ENCODE measurements at regions of chr16 and their contacts with region 1.

Region 1: GRCh38 chr16:28277537-28278388 is 14.6 kb upstream of the SBK1 start:
- DNase-seq: peak; percentile 86
- H3K4me3 ChIP-seq: peak overlapping the region; percentile 48 to 60
- H3K27ac ChIP-seq: peak overlapping the region in 1 of 2 experiments; percentile 71; a peak in 2 of 4 replicates
- H3K4me1 ChIP-seq: peaks cover 0 to 5% of the 10 kb centered on the region in 2 experiments; a peak in 1 of 4 replicates
- H3K27me3 ChIP-seq: peaks cover 6% of the 10 kb centered on the region
- CTCF ChIP-seq: peak; percentile 90
- EP300 ChIP-seq: no peak
- RAD21 ChIP-seq: peak; percentile 97

Region 2: GRCh38 chr16:27977966-27978365 is 299.8 kb before region 1 on chr16:
- CTCF ChIA-PET with region 1: no interaction called
- POLR2A ChIA-PET with region 1: no interaction called
- DNase-seq: no peak
- H3K4me3 ChIP-seq: no peak overlapping the region
- H3K27ac ChIP-seq: no peak overlapping the region
- H3K4me1 ChIP-seq: peaks cover 0 to 5% of the 10 kb centered on the region in 2 experiments; a peak in 1 of 4 replicates
- H3K27me3 ChIP-seq: no peaks in the 10 kb centered on the region
- CTCF ChIP-seq: no peak
- EP300 ChIP-seq: no peak
- RAD21 ChIP-seq: no peak

Region 3: GRCh38 chr16:28255838-28256237 is 21.9 kb before region 1 on chr16:
- CTCF ChIA-PET with region 1: interaction called, 16 read pairs
- POLR2A ChIA-PET with region 1: no interaction called
- DNase-seq: no peak
- H3K4me3 ChIP-seq: no peak overlapping the region
- H3K27ac ChIP-seq: no peak overlapping the region
- H3K4me1 ChIP-seq: peaks cover 0 to 3% of the 10 kb centered on the region in 2 experiments; a peak in 1 of 4 replicates
- H3K27me3 ChIP-seq: no peaks in the 10 kb centered on the region
- CTCF ChIP-seq: no peak
- EP300 ChIP-seq: no peak
- RAD21 ChIP-seq: no peak

Region 4: GRCh38 chr16:28291873-28292660 is 14.3 kb after region 1 on chr16 and contains the start of gene SBK1:
- CTCF ChIA-PET with region 1: interaction called, 82 read pairs
- POLR2A ChIA-PET with region 1: interaction called, 6 read pairs
- DNase-seq: peak; percentile 98
- H3K4me3 ChIP-seq: peak within 1 kb of the TSS; percentile 66 to 70
- H3K27ac ChIP-seq: peak within 1 kb of the TSS; percentile 15 to 86; a peak in 3 of 4 replicates
- H3K4me1 ChIP-seq: peaks cover 3 to 17% of the 10 kb centered on the region in 2 experiments; a peak in 1 of 4 replicates
- H3K27me3 ChIP-seq: 0 out of 2 replicates have a peak, but pooled peaks cover 10% of the 10 kb centered on the region
- CTCF ChIP-seq: no peak
- EP300 ChIP-seq: no peak
- RAD21 ChIP-seq: no peak
- polyA plus RNA-seq, gene SBK1: 0.36 and 0.55 TPM in 2 replicates

Region 5: DNA sequence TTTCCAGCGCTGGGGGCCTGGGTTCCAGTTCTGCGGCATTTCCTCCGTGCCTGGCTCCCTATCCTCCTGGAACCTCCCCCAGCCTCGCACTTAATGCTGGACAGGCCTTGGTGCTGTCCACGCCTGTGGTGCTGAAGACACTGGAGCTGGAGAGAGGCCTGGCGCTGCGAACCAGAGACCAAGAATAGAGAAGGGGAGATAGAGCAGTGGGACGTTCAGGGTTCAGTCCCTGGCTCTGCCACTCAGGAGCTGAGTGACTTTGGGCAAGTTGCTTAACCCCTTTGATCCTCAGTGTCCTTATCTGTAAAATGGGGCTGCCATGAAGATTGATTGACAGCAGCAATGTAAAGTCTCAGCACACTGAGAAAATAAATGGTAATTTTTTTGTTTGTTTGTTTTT is 26.5 kb after region 1 on chr16:
- CTCF ChIA-PET with region 1: interaction called, 302 read pairs
- POLR2A ChIA-PET with region 1: no interaction called
- DNase-seq: no peak
- H3K4me3 ChIP-seq: no peak overlapping the region
- H3K27ac ChIP-seq: no peak overlapping the region
- H3K4me1 ChIP-seq: no peaks in the 10 kb centered on the region
- H3K27me3 ChIP-seq: no peaks in the 10 kb centered on the region
- CTCF ChIP-seq: no peak
- EP300 ChIP-seq: no peak
- RAD21 ChIP-seq: no peak

Region 6: GRCh38 chr16:28326944-28327610 is 49.3 kb after region 1 on chr16:
- CTCF ChIA-PET with region 1: interaction called, 302 read pairs
- POLR2A ChIA-PET with region 1: no interaction called
- DNase-seq: peak; percentile 81
- H3K4me3 ChIP-seq: no peak overlapping the region; a peak in 1 of 4 replicates
- H3K27ac ChIP-seq: no peak overlapping the region
- H3K4me1 ChIP-seq: no peaks in the 10 kb centered on the region; a peak in 1 of 4 replicates
- H3K27me3 ChIP-seq: no peaks in the 10 kb centered on the region
- CTCF ChIP-seq: peak; percentile 73
- EP300 ChIP-seq: no peak
- RAD21 ChIP-seq: peak; percentile 51

Measured in SK-N-SH (cell line).